Transverse colon (tissue), 4 donors: ENCODE measurements at regions of chr17 and their contacts with region 1.

Region 1: DNA sequence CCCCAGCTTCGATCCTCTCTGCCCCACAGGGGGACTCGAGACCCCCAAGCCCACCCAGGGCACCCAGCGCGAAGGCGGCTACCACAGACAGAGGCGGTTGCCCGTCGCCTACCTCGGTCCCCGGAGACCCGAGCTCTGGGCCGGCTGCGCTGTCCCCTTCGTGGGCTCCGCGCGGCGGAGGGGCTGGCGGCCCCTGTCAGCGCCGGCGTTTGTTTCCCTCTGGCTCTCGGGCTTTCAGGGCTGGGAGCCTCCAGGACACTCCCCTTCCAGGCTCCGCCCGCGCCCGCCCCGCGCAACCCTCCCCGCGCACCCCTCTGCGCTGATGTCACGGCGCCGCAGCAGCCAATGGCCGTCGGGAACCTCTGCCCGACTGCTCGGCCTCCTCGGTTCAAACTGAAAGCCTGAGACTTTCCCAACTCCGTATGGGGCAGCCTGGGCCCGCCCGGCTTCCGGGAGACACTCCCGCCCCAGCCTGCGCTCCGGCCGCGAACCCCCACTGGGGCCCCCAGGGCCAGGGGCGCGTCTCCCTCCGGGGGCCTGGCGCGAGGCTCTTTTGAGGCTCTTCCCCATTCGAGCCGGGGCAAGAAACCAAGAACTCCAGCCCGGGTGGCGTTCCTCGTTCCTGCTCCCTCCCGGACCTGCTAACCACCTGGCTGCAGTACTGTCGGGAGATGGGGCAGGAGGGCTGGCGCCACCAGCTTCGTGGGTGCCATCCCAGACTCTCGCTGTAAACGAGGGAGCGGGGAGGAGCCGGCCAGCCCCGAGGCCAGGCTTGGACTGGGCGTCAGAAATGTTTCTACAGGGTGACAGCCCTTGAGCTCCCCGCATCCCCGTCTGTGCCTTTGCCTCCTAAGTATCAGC is at the start of gene CDC42EP4:
- DNase-seq: peak; percentile 97
- H3K4me3 ChIP-seq: peak within 1 kb of the TSS; percentile 84 to 99 (median 96)
- H3K27ac ChIP-seq: peak within 1 kb of the TSS; percentile 99 to 100 (median 100)
- H3K4me1 ChIP-seq: peaks cover 12 to 41% (median 38%) of the 10 kb centered on the region in 4 donors
- H3K27me3 ChIP-seq: no peaks in the 10 kb centered on the region
- CTCF ChIP-seq: no peak
- EP300 ChIP-seq: no peak
- POLR2A ChIP-seq: peak; percentile 99
- total RNA-seq, gene CDC42EP4: 54.9 to 75.6 (median 69.6) TPM

Region 2: DNA sequence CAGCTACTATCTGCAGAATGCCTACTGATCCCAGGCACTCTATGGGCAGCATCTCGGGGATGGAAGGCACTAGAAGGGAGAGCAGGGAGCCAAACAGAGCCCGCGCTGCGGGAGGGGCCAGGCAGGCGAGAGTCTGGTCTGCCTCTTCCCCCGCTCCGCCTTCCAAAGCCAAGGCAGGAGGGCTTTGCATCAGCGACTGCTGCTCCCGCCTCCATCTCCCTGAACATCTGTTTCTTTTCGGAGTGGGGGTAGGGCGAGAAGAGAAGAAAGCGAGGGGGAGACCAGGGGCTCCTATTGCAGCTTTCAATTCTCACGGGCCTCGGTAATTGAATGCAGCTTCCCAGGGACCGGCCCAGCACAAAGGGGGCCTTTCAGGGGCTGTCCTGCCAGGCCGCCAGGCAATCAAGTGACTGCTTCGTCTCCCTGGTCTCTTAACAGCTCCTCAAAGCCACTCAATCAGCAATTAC is 31.2 kb after region 1 on chr17:
- in situ Hi-C with region 1: no loop called
- intact Hi-C with region 1: loop called (anchors 1 kb)
- DNase-seq: peak; percentile 51
- H3K4me3 ChIP-seq: peak overlapping the region in 1 of 4 donors; percentile 15
- H3K27ac ChIP-seq: peak overlapping the region; percentile 68 to 88 (median 82)
- H3K4me1 ChIP-seq: peaks cover 14 to 39% (median 21%) of the 10 kb centered on the region in 4 donors
- H3K27me3 ChIP-seq: no peaks in the 10 kb centered on the region
- CTCF ChIP-seq: no peak
- EP300 ChIP-seq: no peak
- POLR2A ChIP-seq: no peak